AG04450 (cell line): ENCODE measurements at regions of chr3 and their contacts with region 1.

Region 1: GRCh38 chr3:180229113-180229512 is 192.4 kb upstream of the PEX5L start:
- DNase-seq: no peak
- H3K4me3 ChIP-seq: no peak overlapping the region
- H3K27ac ChIP-seq: no peak overlapping the region
- H3K27me3 ChIP-seq: no peaks in the 10 kb centered on the region
- CTCF ChIP-seq: no peak

Region 2: DNA sequence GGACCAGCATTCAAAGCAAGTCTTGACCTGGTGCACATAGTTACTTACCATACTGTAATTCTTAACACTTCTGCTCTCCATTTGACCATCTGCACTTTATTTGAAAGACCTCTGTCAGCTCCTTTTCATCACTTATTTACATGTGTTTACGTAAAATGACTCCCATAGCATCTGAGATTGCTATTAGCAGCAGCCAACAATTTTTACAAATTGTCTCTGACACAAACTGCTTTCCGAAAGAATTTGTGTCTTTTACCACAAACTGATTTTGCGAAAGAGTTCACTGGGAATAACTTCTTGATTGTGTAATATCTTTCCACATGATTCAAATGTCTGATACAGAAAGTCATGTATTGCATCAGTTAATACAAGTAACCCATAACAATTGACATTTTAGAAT is 48.3 kb before region 1 on chr3:
- CTCF ChIA-PET with region 1: interaction called, 10 read pairs
- POLR2A ChIA-PET with region 1: no interaction called
- DNase-seq: peak; percentile 61
- H3K4me3 ChIP-seq: no peak overlapping the region
- H3K27ac ChIP-seq: no peak overlapping the region
- H3K27me3 ChIP-seq: no peaks in the 10 kb centered on the region
- CTCF ChIP-seq: no peak